PC-3 (cell line): ENCODE measurements at regions of chr9 and their contacts with region 1.

Region 1: GRCh38 chr9:81716409-81716808 is 27.1 kb upstream of the TLE1 start:
- DNase-seq: peak; percentile 49
- ATAC-seq: no peak
- H3K4me3 ChIP-seq: no peak overlapping the region
- H3K27ac ChIP-seq: peak overlapping the region; percentile 83
- H3K4me1 ChIP-seq: peaks cover 36% of the 10 kb centered on the region
- H3K27me3 ChIP-seq: no peaks in the 10 kb centered on the region
- CTCF ChIP-seq: no peak

Region 2: DNA sequence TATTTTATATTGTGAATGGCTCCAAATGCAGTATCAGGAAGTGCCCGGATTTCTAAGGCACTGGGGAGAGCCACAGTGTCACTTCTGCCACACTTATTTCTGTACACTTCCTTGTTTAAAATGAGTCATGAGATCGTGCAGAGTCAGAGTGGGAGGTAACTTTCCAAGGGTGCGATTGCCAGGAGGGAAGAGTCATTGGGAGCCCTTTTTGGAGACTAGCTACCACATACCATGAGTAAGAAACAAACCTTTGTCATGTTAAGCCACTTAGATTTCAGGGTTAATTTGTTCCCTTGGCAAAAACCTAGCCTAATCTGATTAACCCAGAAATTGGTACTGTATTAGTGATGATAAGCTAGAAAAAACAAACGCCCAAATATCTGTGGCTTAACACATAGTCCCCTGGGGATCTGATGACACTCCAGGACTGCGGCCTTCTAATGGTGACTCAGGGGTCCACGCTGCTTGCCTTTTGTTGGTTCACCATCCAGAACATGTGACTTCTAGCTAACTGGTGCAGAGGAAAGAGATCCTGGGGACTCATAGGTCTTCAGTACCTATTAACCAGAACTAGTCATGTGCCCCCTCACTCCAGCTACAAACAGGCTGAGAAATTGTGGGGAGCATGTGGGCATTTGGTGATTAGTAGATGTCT is 21.6 kb after region 1 on chr9:
- CTCF ChIA-PET with region 1: no interaction called
- POLR2A ChIA-PET with region 1: no interaction called
- intact Hi-C with region 1: loop called (anchors 1 kb)
- DNase-seq: peak; percentile 89
- ATAC-seq: peak; percentile 95
- H3K4me3 ChIP-seq: no peak overlapping the region
- H3K27ac ChIP-seq: peak overlapping the region; percentile 93
- H3K4me1 ChIP-seq: peaks cover 29% of the 10 kb centered on the region
- H3K27me3 ChIP-seq: no peaks in the 10 kb centered on the region
- CTCF ChIP-seq: no peak

Region 3: DNA sequence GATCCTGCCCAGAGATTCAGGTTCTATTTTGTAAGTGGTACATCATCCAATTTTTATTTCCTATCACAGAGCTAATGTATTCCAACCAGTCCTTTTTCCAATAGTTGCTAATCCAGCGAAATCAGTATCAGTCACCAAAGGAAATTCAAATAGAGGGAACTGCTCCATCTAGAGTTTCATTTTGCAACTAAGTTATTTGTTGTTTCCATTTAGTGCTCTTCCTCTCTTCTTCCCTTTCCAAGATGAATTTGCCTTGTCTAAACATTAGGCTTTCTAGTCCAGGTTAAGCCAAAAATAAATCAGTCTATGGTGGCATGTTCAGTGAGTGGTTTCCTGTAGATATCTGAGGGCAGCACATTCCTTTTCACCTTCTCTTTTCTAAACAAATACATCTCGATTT is 132.1 kb after region 1 on chr9:
- CTCF ChIA-PET with region 1: no interaction called
- POLR2A ChIA-PET with region 1: no interaction called
- intact Hi-C with region 1: loop called (anchors 5 kb)
- DNase-seq: peak; percentile 44
- ATAC-seq: peak; percentile 31
- H3K4me3 ChIP-seq: no peak overlapping the region
- H3K27ac ChIP-seq: 0 out of 2 replicates have a peak overlapping the region, but pooled peaks have one; percentile 9
- H3K4me1 ChIP-seq: peaks cover 23% of the 10 kb centered on the region
- H3K27me3 ChIP-seq: no peaks in the 10 kb centered on the region
- CTCF ChIP-seq: peak; percentile 59